ENCODE measurements at regions of chr7 and their contacts with region 1.

Region 1: GRCh38 chr7:137943147-137943551 is 58.7 kb downstream of the CREB3L2 start:
- DNase-seq: peak in 4 of 5 donors; percentile 49 to 64 (median 57)
- ATAC-seq: peak; percentile 79 to 93 (median 88)
- H3K4me3 ChIP-seq: no peak overlapping the region
- H3K27ac ChIP-seq: peak overlapping the region; percentile 25 to 87 (median 64)
- H3K4me1 ChIP-seq: peaks cover 0 to 54% (median 36%) of the 10 kb centered on the region in 12 donors
- H3K27me3 ChIP-seq: no peaks in the 10 kb centered on the region
- CTCF ChIP-seq: no peak
- POLR2A ChIP-seq: no peak

Region 2: DNA sequence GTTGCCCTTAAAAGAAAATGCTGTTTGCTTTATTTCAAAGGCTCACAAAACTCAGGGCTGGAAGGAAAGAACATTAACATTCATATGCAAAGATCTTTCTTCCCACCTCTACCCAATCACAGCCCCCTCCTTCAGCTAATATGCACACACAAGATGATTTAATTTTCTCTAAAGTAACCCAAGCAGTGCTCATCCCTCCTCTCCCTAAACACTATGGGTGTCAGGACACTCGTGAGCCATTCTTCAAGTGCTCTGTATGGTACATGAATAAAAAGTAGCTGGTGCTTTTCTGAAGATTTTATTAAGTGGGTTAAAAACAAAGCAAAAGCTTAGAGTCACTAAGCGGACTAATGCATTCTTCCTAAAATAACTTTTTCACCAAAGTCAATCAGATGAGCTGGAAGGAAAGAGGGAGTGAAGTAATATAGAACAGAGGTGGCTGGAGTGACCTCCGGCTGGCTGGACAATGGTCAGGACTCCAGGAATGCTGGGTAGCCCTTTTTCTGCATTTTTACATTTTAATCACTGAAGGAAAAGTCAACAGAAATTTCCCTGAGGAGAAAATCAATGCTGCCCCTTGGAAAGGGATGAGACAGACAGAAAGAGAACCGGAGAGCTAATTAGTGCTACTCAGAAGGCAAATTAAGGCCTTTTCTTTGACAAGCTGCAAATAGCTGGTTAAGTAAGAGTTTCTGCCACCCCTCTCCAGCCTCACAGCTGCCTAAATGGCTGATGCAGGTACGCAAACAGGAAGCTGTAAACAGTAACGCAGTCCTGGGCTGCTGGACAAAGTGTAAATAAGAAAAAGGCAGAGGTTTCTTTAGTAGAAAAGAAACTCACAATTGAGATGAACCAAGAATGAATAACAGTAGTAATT is 103.0 kb before region 1 on chr7:
- intact Hi-C with region 1: no loop called
- DNase-seq: no peak
- ATAC-seq: no peak
- H3K4me3 ChIP-seq: no peak overlapping the region
- H3K27ac ChIP-seq: no peak overlapping the region
- H3K4me1 ChIP-seq: no peaks in the 10 kb centered on the region
- H3K27me3 ChIP-seq: peaks cover 0 to 16% (median 5%) of the 10 kb centered on the region in 9 donors
- CTCF ChIP-seq: no peak
- POLR2A ChIP-seq: no peak

Region 3: DNA sequence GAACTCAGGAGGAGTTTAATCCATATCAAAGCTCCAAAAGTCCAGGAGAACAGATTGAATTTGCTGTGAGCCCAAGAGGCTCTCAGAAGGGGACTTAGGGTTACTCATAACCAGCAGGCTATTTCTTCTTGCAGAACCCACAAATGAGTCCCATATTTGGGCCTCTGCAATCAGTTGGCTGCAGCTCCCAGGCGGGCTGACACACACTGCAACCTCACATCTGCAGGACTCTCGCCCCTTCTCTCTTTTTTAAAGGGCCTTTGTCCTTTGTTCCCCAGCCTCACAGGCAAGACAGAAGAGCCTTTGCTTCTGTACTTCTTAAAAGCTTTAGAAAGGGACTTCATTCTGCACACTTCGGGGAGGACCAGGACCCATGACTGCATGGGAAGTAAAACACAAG is 32.1 kb after region 1 on chr7:
- intact Hi-C with region 1: loop called in 2 of 10 experiments (anchors 5 kb)
- DNase-seq: peak; percentile 47 to 75 (median 61)
- ATAC-seq: peak; percentile 41 to 57 (median 48)
- H3K4me3 ChIP-seq: peak overlapping the region in 1 of 12 donors; percentile 13
- H3K27ac ChIP-seq: peak overlapping the region; percentile 37 to 79 (median 64)
- H3K4me1 ChIP-seq: peaks cover 4 to 77% (median 52%) of the 10 kb centered on the region in 12 donors
- H3K27me3 ChIP-seq: no peaks in the 10 kb centered on the region
- CTCF ChIP-seq: no peak
- POLR2A ChIP-seq: no peak

Region 4: GRCh38 chr7:137985253-137985896 is 42.2 kb after region 1 on chr7:
- intact Hi-C with region 1: loop called in 3 of 10 experiments (anchors 5 to 10 kb)
- DNase-seq: no peak
- ATAC-seq: no peak
- H3K4me3 ChIP-seq: no peak overlapping the region
- H3K27ac ChIP-seq: peak overlapping the region in 2 of 12 donors; percentile 22 to 56
- H3K4me1 ChIP-seq: peaks cover 0 to 98% (median 85%) of the 10 kb centered on the region in 12 donors
- H3K27me3 ChIP-seq: no peaks in the 10 kb centered on the region
- CTCF ChIP-seq: no peak
- POLR2A ChIP-seq: no peak

Region 5: DNA sequence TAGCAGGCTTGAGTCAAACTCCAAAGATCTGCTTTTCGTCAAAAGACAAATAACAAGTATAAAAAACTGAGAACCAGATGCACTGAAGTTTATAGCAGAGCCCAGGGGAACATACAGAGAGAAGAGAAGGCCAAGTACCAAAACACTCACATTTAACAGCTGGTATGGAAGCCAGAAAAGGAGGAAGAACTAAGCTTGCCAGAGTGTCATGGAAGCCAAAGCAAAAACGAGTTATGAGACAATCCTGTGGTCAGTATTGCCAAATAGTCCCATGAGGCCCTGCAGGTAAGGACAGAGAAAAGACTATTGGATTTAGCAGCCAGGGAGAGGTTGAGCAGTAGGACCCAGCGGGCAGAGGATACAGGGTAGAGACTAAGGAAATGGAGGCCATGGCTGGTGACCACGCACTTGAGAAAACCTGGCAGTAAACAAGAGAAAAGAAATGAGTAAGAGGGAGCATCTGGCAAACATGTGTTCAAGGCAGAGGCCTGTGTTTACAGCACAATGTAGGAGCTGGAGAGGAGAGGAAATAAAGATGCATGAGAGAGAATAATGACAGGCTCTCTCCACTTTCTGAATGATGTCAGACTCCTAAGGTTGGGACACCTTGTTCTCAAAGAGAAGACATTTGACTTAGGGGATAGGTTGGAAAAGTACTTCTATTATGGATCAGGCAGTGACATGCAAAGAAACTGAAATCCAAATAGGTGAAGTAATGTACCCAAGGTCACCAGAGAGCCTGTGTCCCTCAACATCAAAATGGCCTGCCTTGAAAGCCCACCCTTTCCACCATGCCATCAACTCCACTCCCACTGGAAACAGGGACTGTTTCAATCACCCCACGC is 49.6 kb after region 1 on chr7:
- intact Hi-C with region 1: loop called in 3 of 10 experiments (anchors 5 to 10 kb)
- DNase-seq: peak in 4 of 5 donors; percentile 51 to 78 (median 67)
- ATAC-seq: peak; percentile 52 to 80 (median 74)
- H3K4me3 ChIP-seq: no peak overlapping the region
- H3K27ac ChIP-seq: peak overlapping the region; percentile 3 to 94 (median 70)
- H3K4me1 ChIP-seq: peaks cover 0 to 98% (median 79%) of the 10 kb centered on the region in 12 donors
- H3K27me3 ChIP-seq: no peaks in the 10 kb centered on the region
- CTCF ChIP-seq: no peak
- POLR2A ChIP-seq: no peak

Region 6: DNA sequence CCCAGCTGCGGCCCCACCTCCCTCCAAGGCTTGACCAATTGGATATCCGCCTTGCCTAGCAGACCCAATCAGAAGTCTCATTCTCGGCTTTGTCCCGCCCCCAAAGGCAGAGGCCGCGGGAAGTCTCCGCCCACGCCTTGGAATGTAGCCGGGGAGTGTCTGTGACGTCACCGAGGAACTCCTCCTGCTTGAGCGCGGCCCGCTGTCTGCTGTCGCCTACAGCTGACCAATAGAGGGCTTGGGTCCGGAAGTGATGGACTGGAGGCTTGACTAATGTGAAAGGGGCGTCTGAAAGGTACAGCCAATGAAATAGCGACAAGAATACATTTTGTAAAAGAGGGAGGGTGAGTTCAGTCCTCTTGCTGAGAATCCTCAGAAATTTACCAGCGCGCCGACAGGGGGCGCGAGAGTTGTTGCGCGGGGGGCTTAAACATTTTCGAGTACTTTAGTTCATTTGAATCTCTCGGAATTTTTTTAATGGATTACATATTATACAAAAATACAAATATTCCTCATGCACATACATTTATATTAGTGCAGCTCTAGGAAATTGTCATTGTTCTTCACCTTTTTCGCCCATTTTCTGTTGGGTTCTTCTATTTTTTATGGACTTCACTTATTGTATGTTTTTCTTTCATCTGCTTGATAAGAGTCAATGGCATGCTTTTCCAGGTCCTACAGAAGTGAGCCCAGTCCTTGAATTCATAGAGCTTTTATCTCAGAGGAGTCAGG is 59.1 kb after region 1 on chr7:
- intact Hi-C with region 1: loop called in 3 of 10 experiments (anchors 5 to 10 kb)
- DNase-seq: peak; percentile 99
- ATAC-seq: peak; percentile 96 to 98 (median 98)
- H3K4me3 ChIP-seq: peak overlapping the region; percentile 70 to 99 (median 81)
- H3K27ac ChIP-seq: peak overlapping the region in 11 of 12 donors; percentile 86 to 97 (median 92)
- H3K4me1 ChIP-seq: peaks cover 0 to 37% (median 31%) of the 10 kb centered on the region in 12 donors
- H3K27me3 ChIP-seq: no peaks in the 10 kb centered on the region
- CTCF ChIP-seq: peak; percentile 87 to 98 (median 93)
- POLR2A ChIP-seq: no peak

Region 7: GRCh38 chr7:138151731-138152577 is 208.8 kb after region 1 on chr7:
- intact Hi-C with region 1: no loop called
- DNase-seq: no peak
- ATAC-seq: no peak
- H3K4me3 ChIP-seq: no peak overlapping the region
- H3K27ac ChIP-seq: no peak overlapping the region
- H3K4me1 ChIP-seq: no peaks in the 10 kb centered on the region
- H3K27me3 ChIP-seq: no peaks in the 10 kb centered on the region
- CTCF ChIP-seq: no peak
- POLR2A ChIP-seq: no peak